A549 (cell line): ENCODE measurements at regions of chr5 and their contacts with region 1.

Region 1: GRCh38 chr5:149618581-149619251 is 37.4 kb downstream of the ARHGEF37 start:
- DNase-seq: peak; percentile 73 to 75
- ATAC-seq: peak; percentile 86 to 96
- H3K4me3 ChIP-seq: no peak overlapping the region
- H3K27ac ChIP-seq: peak overlapping the region; percentile 14 to 33; a peak in 1 of 6 replicates
- H3K4me1 ChIP-seq: peaks cover 9% of the 10 kb centered on the region; the same call in 1 of the 3 replicates
- CTCF ChIP-seq: peak; percentile 90
- EP300 ChIP-seq: no peak
- POLR2A ChIP-seq: no peak
- RAD21 ChIP-seq: peak; percentile 83 to 89

Region 2: DNA sequence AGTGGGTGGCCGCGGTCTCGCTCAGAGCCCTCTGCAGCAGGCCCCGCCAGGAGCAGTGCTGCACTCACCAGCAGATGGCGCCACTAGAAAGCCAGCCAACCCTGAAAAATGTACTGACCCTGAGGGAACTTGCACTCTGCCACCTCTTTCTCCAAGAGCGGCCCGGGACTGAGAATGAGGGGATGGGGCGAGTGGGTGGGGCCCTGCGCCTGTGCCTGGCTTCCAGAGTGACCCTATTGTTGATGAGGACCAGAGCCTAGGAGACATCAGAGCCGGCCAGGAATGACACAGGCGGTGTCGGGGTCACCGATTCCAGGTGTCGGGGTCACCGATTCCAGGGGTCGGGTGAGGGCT is 236.8 kb before region 1 on chr5:
- CTCF ChIA-PET with region 1: interaction called, 10 read pairs
- POLR2A ChIA-PET with region 1: no interaction called
- DNase-seq: peak; percentile 68 to 86
- ATAC-seq: peak; percentile 89 to 98
- H3K4me3 ChIP-seq: no peak overlapping the region
- H3K27ac ChIP-seq: peak overlapping the region; percentile 43 to 72; a peak in 2 of 6 replicates
- H3K4me1 ChIP-seq: no peaks in the 10 kb centered on the region; the same call in 2 of the 3 replicates
- CTCF ChIP-seq: peak; percentile 91
- EP300 ChIP-seq: no peak
- POLR2A ChIP-seq: no peak
- RAD21 ChIP-seq: peak; percentile 89 to 92

Region 3: GRCh38 chr5:149576021-149576420 is 42.7 kb before region 1 on chr5:
- CTCF ChIA-PET with region 1: interaction called, 40 read pairs
- POLR2A ChIA-PET with region 1: no interaction called
- DNase-seq: no peak
- ATAC-seq: no peak
- H3K4me3 ChIP-seq: no peak overlapping the region
- H3K27ac ChIP-seq: no peak overlapping the region
- H3K4me1 ChIP-seq: 0 out of 3 replicates have a peak, but pooled peaks cover 4% of the 10 kb centered on the region
- CTCF ChIP-seq: no peak
- EP300 ChIP-seq: no peak
- POLR2A ChIP-seq: no peak
- RAD21 ChIP-seq: no peak

Region 4: DNA sequence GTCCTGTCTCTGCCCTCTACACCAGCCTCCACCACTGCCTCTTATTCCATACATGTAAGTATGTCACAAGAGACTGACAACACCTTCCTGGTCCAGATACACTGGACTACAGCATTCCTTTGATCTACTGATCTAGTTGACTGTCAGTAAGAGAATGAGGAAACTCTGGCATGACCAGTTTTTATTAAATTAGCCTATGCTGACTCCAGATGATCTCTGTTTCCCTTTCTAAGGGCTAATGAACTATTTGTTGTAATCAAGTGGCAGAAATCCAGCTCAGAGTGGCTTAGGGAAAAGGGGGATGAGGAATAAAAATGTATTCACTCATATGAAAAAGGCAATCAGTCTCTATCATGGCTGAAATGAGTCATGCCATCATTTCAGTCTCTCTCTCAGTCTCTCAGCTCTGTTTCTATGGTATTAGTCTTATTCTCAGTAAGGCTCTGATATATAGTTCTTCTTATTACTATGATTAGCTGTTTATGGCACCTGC is 31.9 kb before region 1 on chr5:
- CTCF ChIA-PET with region 1: interaction called, 40 read pairs
- POLR2A ChIA-PET with region 1: no interaction called
- DNase-seq: no peak
- ATAC-seq: no peak; a peak in 1 of 6 replicates
- H3K4me3 ChIP-seq: no peak overlapping the region
- H3K27ac ChIP-seq: no peak overlapping the region
- H3K4me1 ChIP-seq: peaks cover 14% of the 10 kb centered on the region; the same call in 2 of the 3 replicates
- CTCF ChIP-seq: no peak
- EP300 ChIP-seq: no peak
- POLR2A ChIP-seq: no peak
- RAD21 ChIP-seq: no peak

Region 5: DNA sequence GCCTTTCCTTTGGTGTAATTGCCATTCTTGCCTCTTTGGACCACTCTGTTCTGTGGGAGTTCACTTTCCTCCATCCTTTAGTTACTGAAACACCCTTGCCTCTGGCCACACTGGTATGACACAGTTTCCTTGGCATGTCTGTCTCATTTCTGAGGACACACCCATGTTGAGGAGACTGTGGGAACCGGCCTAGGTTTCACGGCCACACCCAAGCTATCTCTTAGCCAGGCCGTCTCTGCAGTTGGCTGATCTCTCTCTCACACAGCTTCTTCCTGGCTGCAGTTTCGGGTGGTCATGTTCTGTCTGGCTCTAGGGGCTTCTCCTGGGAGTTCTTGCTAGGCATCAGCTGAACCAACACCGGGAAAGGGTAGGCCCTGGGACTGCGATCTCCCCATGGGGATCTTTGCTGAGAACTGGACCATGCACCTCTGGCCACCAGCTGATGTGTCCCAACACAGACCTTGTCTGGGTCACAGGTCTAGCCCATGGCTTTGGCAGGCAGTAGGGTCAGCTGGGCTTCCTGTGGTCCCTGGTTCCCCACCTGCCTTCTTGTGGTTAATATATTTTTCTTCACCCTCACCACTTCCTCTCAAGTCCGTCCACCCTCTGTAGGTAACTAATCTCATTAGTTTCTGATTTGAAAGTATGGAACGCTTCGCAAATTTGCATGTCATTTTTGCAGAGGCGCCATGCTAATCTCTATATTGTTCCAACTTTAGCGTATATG is 12.6 kb before region 1 on chr5:
- CTCF ChIA-PET with region 1: interaction called, 102 read pairs
- POLR2A ChIA-PET with region 1: no interaction called
- DNase-seq: peak; percentile 95
- ATAC-seq: peak; percentile 95
- H3K4me3 ChIP-seq: 0 out of 3 replicates have a peak overlapping the region, but pooled peaks have one; percentile 15
- H3K27ac ChIP-seq: peak overlapping the region; percentile 83 to 94
- H3K4me1 ChIP-seq: peaks cover 54% of the 10 kb centered on the region
- CTCF ChIP-seq: no peak
- EP300 ChIP-seq: no peak
- POLR2A ChIP-seq: no peak
- RAD21 ChIP-seq: no peak